IMR-90 (cell line): ENCODE measurements at regions of chr17 and their contacts with region 1.

Region 1: GRCh38 chr17:60720763-60721531 is 43.3 kb downstream of the BCAS3 start:
- DNase-seq: peak; percentile 81
- ATAC-seq: peak; percentile 90
- H3K4me3 ChIP-seq: no peak overlapping the region
- H3K27ac ChIP-seq: no peak overlapping the region
- H3K4me1 ChIP-seq: peaks cover 3% of the 10 kb centered on the region; the same call in 1 of the 2 replicates
- H3K27me3 ChIP-seq: no peaks in the 10 kb centered on the region
- CTCF ChIP-seq: peak; percentile 86
- POLR2A ChIP-seq: peak; percentile 31; the same call in 1 of the 2 replicates
- RAD21 ChIP-seq: peak; percentile 94

Region 2: GRCh38 chr17:60640503-60640902 is 80.4 kb before region 1 on chr17:
- CTCF ChIA-PET with region 1: no interaction called
- POLR2A ChIA-PET with region 1: no interaction called
- dilution Hi-C with region 1: no loop called
- in situ Hi-C with region 1: no loop called
- intact Hi-C with region 1: no loop called
- DNase-seq: peak; percentile 22
- ATAC-seq: no peak
- H3K4me3 ChIP-seq: no peak overlapping the region
- H3K27ac ChIP-seq: no peak overlapping the region
- H3K4me1 ChIP-seq: peaks cover 4% of the 10 kb centered on the region; the same call in 1 of the 2 replicates
- H3K27me3 ChIP-seq: no peaks in the 10 kb centered on the region
- CTCF ChIP-seq: peak; percentile 37
- POLR2A ChIP-seq: no peak
- RAD21 ChIP-seq: no peak

Region 3: DNA sequence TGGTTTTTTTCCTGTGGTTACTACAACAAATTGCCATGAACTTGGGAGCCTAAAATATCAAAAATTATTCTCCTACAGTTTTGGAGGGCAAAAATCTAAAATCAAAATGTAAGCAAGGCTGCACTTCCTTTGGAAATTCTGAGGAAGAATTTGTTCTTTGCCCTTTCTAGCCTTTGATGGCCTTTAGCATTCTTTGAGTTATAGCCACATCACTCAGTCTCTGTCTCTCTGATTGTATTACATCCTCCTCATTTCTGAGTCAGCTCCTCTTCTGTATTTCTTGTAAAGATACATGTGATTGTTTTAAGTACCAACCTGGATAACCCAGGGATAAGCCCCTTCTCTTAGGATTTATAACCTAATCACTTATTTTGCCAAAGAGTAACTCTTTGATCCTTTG is 238.7 kb after region 1 on chr17:
- CTCF ChIA-PET with region 1: no interaction called
- POLR2A ChIA-PET with region 1: no interaction called
- dilution Hi-C with region 1: no loop called
- in situ Hi-C with region 1: loop called (anchors 10 kb)
- intact Hi-C with region 1: no loop called
- DNase-seq: no peak
- ATAC-seq: 0 out of 2 replicates have a peak, but pooled peaks have one; percentile 17
- H3K4me3 ChIP-seq: no peak overlapping the region
- H3K27ac ChIP-seq: no peak overlapping the region
- H3K4me1 ChIP-seq: no peaks in the 10 kb centered on the region
- H3K27me3 ChIP-seq: no peaks in the 10 kb centered on the region
- CTCF ChIP-seq: no peak
- POLR2A ChIP-seq: no peak
- RAD21 ChIP-seq: no peak

Region 4: GRCh38 chr17:61002316-61002736 is 281.4 kb after region 1 on chr17:
- CTCF ChIA-PET with region 1: interaction called, 8 read pairs
- POLR2A ChIA-PET with region 1: no interaction called
- dilution Hi-C with region 1: no loop called
- in situ Hi-C with region 1: no loop called
- intact Hi-C with region 1: loop called (anchors 2 kb)
- DNase-seq: peak; percentile 79
- ATAC-seq: peak; percentile 75
- H3K4me3 ChIP-seq: no peak overlapping the region
- H3K27ac ChIP-seq: no peak overlapping the region
- H3K4me1 ChIP-seq: no peaks in the 10 kb centered on the region
- H3K27me3 ChIP-seq: no peaks in the 10 kb centered on the region
- CTCF ChIP-seq: peak; percentile 71
- POLR2A ChIP-seq: no peak
- RAD21 ChIP-seq: peak; percentile 84

Region 5: GRCh38 chr17:61412143-61412859 is 691.4 kb after region 1 on chr17:
- CTCF ChIA-PET with region 1: no interaction called
- POLR2A ChIA-PET with region 1: interaction called, 4 read pairs
- dilution Hi-C with region 1: no loop called
- in situ Hi-C with region 1: loop called (anchors 5 kb)
- intact Hi-C with region 1: no loop called
- DNase-seq: peak; percentile 75
- ATAC-seq: peak; percentile 44
- H3K4me3 ChIP-seq: peak overlapping the region; percentile 66
- H3K27ac ChIP-seq: peak overlapping the region; percentile 91
- H3K4me1 ChIP-seq: peaks cover 40% of the 10 kb centered on the region
- H3K27me3 ChIP-seq: no peaks in the 10 kb centered on the region
- CTCF ChIP-seq: peak; percentile 98
- POLR2A ChIP-seq: peak; percentile 63
- RAD21 ChIP-seq: peak; percentile 98